MCF 10A (cell line): ENCODE measurements at regions of chr6 and their contacts with region 1.

Region 1: GRCh38 chr6:99868074-99868702 is 125.8 kb downstream of the MCHR2 start:
- DNase-seq: peak; percentile 85
- H3K4me3 Mint-ChIP-seq: no peak overlapping the region
- H3K27ac Mint-ChIP-seq: no peak overlapping the region
- H3K4me1 Mint-ChIP-seq: no peaks in the 10 kb centered on the region
- H3K27me3 Mint-ChIP-seq: peaks cover 13% of the 10 kb centered on the region
- CTCF ChIP-seq: peak; percentile 86

Region 2: GRCh38 chr6:99836471-99836870 is 31.7 kb before region 1 on chr6:
- CTCF ChIA-PET with region 1: interaction called, 10 read pairs
- POLR2A ChIA-PET with region 1: no interaction called
- intact Hi-C with region 1: no loop called
- DNase-seq: peak; percentile 75
- H3K4me3 Mint-ChIP-seq: no peak overlapping the region
- H3K27ac Mint-ChIP-seq: peak overlapping the region; percentile 82
- H3K4me1 Mint-ChIP-seq: no peaks in the 10 kb centered on the region
- H3K27me3 Mint-ChIP-seq: no peaks in the 10 kb centered on the region
- CTCF ChIP-seq: no peak

Region 3: GRCh38 chr6:99882128-99882702 is 14.0 kb after region 1 on chr6:
- CTCF ChIA-PET with region 1: interaction called, 49 read pairs
- POLR2A ChIA-PET with region 1: interaction called, 3 read pairs
- intact Hi-C with region 1: no loop called
- DNase-seq: no peak
- H3K4me3 Mint-ChIP-seq: no peak overlapping the region
- H3K27ac Mint-ChIP-seq: no peak overlapping the region
- H3K4me1 Mint-ChIP-seq: no peaks in the 10 kb centered on the region
- H3K27me3 Mint-ChIP-seq: no peaks in the 10 kb centered on the region
- CTCF ChIP-seq: no peak

Region 4: GRCh38 chr6:99912657-99913056 is 44.5 kb after region 1 on chr6:
- CTCF ChIA-PET with region 1: interaction called, 10 read pairs
- POLR2A ChIA-PET with region 1: no interaction called
- intact Hi-C with region 1: no loop called
- DNase-seq: no peak
- H3K4me3 Mint-ChIP-seq: no peak overlapping the region
- H3K27ac Mint-ChIP-seq: no peak overlapping the region
- H3K4me1 Mint-ChIP-seq: no peaks in the 10 kb centered on the region
- H3K27me3 Mint-ChIP-seq: no peaks in the 10 kb centered on the region
- CTCF ChIP-seq: no peak

Region 5: GRCh38 chr6:100088009-100088408 is 219.8 kb after region 1 on chr6:
- CTCF ChIA-PET with region 1: interaction called, 23 read pairs
- POLR2A ChIA-PET with region 1: no interaction called
- intact Hi-C with region 1: no loop called
- DNase-seq: peak; percentile 77
- H3K4me3 Mint-ChIP-seq: no peak overlapping the region
- H3K27ac Mint-ChIP-seq: peak overlapping the region; percentile 88
- H3K4me1 Mint-ChIP-seq: peaks cover 21% of the 10 kb centered on the region
- H3K27me3 Mint-ChIP-seq: no peaks in the 10 kb centered on the region
- CTCF ChIP-seq: no peak

Region 6: DNA sequence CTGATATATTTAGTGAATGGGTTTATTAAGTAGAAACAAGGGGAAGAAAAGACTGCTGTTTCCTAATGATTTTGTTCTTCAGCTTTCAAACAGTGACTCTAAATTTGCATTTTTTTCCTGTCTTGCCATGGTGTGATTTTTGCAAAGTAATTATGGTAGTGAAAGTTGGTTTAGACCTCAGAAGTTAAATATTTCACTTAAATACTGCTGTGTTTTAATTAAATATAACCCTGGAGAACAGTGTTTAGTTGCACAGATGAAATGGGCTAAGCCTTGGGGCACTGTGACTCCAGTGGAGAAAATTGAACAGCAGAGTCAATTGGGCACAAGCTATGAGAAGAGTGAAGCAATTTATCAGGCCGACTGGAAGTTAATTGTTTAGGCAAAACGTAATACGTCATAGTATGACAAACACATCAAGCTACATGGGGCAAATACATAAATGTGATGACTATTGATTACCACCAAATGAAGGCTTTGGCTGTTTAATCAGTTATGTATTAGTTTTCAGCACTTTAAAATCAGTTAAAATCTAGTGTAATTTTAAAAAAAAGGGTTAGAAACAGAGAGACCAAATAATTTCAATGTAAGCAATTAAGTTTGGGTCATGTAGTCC is 237.1 kb after region 1 on chr6:
- CTCF ChIA-PET with region 1: interaction called, 174 read pairs
- POLR2A ChIA-PET with region 1: no interaction called
- intact Hi-C with region 1: no loop called
- DNase-seq: no peak
- H3K4me3 Mint-ChIP-seq: no peak overlapping the region
- H3K27ac Mint-ChIP-seq: no peak overlapping the region
- H3K4me1 Mint-ChIP-seq: peaks cover 5% of the 10 kb centered on the region
- H3K27me3 Mint-ChIP-seq: no peaks in the 10 kb centered on the region
- CTCF ChIP-seq: no peak

Region 7: GRCh38 chr6:100664274-100665040 is 796.3 kb after region 1 on chr6:
- CTCF ChIA-PET with region 1: interaction called, 12 read pairs
- POLR2A ChIA-PET with region 1: no interaction called
- intact Hi-C with region 1: loop called (anchors 10 kb)
- DNase-seq: peak; percentile 44
- H3K4me3 Mint-ChIP-seq: no peak overlapping the region
- H3K27ac Mint-ChIP-seq: no peak overlapping the region
- H3K4me1 Mint-ChIP-seq: peaks cover 11% of the 10 kb centered on the region
- H3K27me3 Mint-ChIP-seq: no peaks in the 10 kb centered on the region
- CTCF ChIP-seq: peak; percentile 50